ENCODE measurements at regions of chr7 and their contacts with region 1.

Region 1: GRCh38 chr7:6350433-6351058 is 78.1 kb upstream of the CYTH3 start:
- DNase-seq: no peak
- ATAC-seq: no peak
- H3K4me3 ChIP-seq: no peak overlapping the region
- H3K27ac ChIP-seq: no peak overlapping the region
- H3K4me1 ChIP-seq: 0 out of 2 replicates have a peak, but pooled peaks cover 3% of the 10 kb centered on the region
- H3K27me3 ChIP-seq: no peaks in the 10 kb centered on the region
- CTCF ChIP-seq: no peak

Region 2: DNA sequence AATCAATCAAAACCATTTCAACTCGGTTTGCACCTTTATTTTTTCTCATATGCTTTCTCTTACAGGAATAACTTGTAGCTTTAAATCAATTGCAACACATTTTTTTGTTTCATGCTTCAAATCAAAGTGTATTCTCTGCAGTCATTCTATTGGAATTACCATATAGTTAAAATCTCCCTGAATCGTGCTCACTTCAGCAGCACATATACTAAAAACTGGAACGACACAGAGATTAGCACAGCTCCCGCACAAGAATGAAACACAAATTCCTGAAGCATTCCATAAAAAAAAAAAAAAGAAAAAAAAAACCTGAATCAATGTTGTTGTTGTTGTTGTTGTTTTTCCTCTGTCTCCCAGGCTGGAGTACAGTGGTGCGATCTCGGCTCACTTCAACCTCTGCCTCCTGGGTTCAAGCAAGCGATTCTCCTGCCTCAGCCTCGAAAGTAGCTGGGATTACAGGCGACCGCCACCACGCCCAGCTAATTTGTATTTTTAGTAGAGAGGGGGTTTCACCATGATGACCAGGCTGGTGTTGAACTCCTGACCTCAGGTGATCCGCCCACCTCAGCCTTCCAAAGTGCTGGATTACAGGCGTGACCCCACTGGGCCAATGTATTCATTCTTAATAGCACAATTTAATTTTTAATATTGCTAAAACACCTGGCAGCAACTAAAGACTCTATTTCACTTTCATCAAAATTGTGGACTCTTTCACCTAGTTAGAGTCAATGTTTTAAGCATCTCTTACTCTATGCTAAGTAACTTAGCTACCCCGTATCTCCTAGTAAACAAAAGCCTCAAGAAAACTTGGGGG is 293.0 kb before region 1 on chr7:
- CTCF ChIA-PET with region 1: no interaction called
- POLR2A ChIA-PET with region 1: interaction called, 19 read pairs
- in situ Hi-C with region 1: no loop called
- intact Hi-C with region 1: no loop called
- DNase-seq: no peak
- ATAC-seq: no peak
- H3K4me3 ChIP-seq: peak overlapping the region; percentile 67 to 73
- H3K27ac ChIP-seq: peak overlapping the region; percentile 89
- H3K4me1 ChIP-seq: peaks cover 8% of the 10 kb centered on the region
- H3K27me3 ChIP-seq: no peaks in the 10 kb centered on the region
- CTCF ChIP-seq: no peak

Region 3: DNA sequence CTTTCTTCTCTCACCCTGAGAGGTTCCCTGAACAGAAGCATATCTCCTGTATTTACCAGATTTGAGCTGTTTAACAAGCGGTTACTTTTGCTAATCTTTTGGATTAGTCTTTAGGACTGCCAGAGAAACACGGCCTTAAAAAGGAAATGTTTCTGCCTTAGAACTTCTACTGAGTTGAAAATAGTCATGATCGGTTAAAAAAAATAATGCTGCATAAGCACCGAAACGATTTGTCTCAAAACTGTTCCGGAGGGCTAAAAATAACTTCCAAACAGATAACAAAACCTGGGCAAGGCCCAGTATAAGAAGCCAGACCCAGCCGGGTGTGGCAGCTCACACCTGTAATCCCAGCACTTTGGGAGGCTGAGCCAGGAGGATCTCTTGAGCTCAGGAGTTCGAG is 34.8 kb before region 1 on chr7:
- CTCF ChIA-PET with region 1: no interaction called
- POLR2A ChIA-PET with region 1: no interaction called
- in situ Hi-C with region 1: no loop called
- intact Hi-C with region 1: no loop called
- DNase-seq: no peak
- ATAC-seq: no peak
- H3K4me3 ChIP-seq: no peak overlapping the region
- H3K27ac ChIP-seq: no peak overlapping the region
- H3K4me1 ChIP-seq: 0 out of 2 replicates have a peak, but pooled peaks cover 3% of the 10 kb centered on the region
- H3K27me3 ChIP-seq: no peaks in the 10 kb centered on the region
- CTCF ChIP-seq: no peak

Measured in Panc1 (cell line).